ENCODE measurements at regions of chr4 and their contacts with region 1.

Region 1: DNA sequence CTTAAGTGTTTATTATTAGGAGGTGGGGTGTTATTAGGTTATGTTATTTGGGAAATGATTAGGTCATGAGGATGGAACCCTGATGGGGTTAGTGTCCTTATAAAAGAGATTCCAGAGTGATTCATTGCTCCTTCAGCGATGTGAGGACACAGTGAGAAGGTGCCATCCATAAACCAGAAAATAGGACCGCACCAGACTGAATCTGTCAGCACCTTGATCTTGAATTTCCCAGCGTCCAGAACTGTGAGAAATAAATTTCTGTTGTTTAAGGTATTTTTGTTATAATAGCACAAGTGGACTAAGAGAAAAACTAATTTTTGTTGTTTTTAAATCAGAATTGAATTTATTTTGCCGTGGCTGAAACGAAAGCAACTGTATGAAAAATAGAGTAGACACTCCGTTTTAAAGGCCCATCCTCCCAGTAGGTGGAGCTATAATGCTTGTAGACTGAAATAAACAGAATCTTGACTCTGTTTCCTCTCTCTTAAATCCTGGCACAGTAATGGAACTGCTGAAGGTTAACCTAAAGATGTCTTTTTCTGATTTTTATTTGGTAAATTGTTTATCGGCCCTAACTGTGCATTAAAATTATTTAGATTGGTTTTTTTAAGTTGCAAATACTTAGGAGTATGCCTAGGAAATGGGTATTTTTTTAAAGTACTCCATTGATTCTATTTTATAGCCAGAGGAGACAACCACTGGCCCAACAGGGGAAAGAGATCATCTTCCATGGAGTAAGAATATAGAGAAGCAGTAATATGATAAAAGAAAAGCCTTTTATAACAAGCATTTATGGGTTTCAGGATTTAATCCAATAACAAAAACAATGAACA is 133.2 kb upstream of the ADAMTS3 start:
- DNase-seq: peak; percentile 42
- ATAC-seq: peak; percentile 78
- H3K4me3 ChIP-seq: peak overlapping the region; percentile 41 to 62 (median 44); a peak in 5 of 6 replicates
- H3K27ac ChIP-seq: no peak overlapping the region
- H3K4me1 ChIP-seq: no peaks in the 10 kb centered on the region
- H3K27me3 ChIP-seq: no peaks in the 10 kb centered on the region
- CTCF ChIP-seq: peak; percentile 70
- EP300 ChIP-seq: no peak
- POLR2A ChIP-seq: no peak
- RAD21 ChIP-seq: no peak

Region 2: DNA sequence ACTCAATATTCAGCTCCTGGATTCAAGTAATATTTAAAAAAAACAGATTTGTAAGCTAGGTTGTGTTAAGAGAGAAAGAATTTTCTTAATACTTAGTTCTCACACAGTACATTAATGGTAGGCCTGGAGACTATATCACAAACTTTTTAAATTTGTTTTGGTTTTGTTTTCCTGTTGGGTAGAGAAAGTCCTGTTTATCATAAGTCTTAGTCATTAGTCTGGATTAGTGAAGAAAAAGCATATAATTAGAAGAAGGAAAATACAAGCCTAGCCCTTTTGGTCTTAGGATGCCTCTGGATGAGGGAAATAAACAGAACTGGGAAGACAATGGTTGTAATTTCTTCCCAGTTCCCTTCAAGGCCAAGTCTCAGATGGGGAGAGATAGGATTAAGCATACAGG is 296.8 kb before region 1 on chr4:
- CTCF ChIA-PET with region 1: no interaction called
- POLR2A ChIA-PET with region 1: no interaction called
- in situ Hi-C with region 1: no loop called
- intact Hi-C with region 1: no loop called
- DNase-seq: no peak
- ATAC-seq: no peak
- H3K4me3 ChIP-seq: no peak overlapping the region
- H3K27ac ChIP-seq: no peak overlapping the region
- H3K4me1 ChIP-seq: no peaks in the 10 kb centered on the region
- H3K27me3 ChIP-seq: no peaks in the 10 kb centered on the region
- CTCF ChIP-seq: no peak
- EP300 ChIP-seq: no peak
- POLR2A ChIP-seq: no peak
- RAD21 ChIP-seq: no peak

Region 3: DNA sequence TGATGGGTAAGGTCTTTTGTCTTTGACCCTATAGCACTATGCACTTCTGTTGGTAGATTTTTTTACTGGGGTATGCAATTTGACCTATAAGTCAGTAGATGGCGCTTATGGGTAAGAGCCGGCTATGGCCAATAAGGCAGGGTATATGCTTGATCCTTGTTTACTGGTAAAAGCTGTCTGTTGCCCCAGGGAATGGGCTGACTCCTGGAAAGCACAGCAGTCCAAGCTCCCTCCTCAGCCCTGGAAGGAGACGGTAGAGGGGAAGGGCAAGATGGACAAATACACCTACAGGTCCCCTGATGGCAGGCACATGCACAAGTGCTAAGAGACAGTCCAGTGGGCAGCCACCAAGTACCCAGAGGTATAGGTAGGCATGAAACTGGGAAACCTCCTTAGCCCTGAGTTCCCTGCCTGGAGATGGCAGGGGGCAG is 196.9 kb before region 1 on chr4:
- CTCF ChIA-PET with region 1: no interaction called
- POLR2A ChIA-PET with region 1: no interaction called
- in situ Hi-C with region 1: no loop called
- intact Hi-C with region 1: loop called (anchors 5 kb)
- DNase-seq: peak; percentile 24
- ATAC-seq: peak; percentile 92
- H3K4me3 ChIP-seq: no peak overlapping the region
- H3K27ac ChIP-seq: no peak overlapping the region
- H3K4me1 ChIP-seq: no peaks in the 10 kb centered on the region
- H3K27me3 ChIP-seq: no peaks in the 10 kb centered on the region
- CTCF ChIP-seq: peak; percentile 71
- EP300 ChIP-seq: no peak
- POLR2A ChIP-seq: no peak
- RAD21 ChIP-seq: 0 out of 2 replicates have a peak, but pooled peaks have one; percentile 19

Region 4: GRCh38 chr4:72909461-72909860 is 207.3 kb after region 1 on chr4:
- CTCF ChIA-PET with region 1: interaction called, 4 read pairs
- POLR2A ChIA-PET with region 1: no interaction called
- in situ Hi-C with region 1: no loop called
- intact Hi-C with region 1: loop called (anchors 1 kb)
- DNase-seq: peak; percentile 10
- ATAC-seq: peak; percentile 74
- H3K4me3 ChIP-seq: no peak overlapping the region
- H3K27ac ChIP-seq: no peak overlapping the region
- H3K4me1 ChIP-seq: no peaks in the 10 kb centered on the region
- H3K27me3 ChIP-seq: no peaks in the 10 kb centered on the region
- CTCF ChIP-seq: peak; percentile 51
- EP300 ChIP-seq: no peak
- POLR2A ChIP-seq: no peak
- RAD21 ChIP-seq: no peak